Stomach (tissue), 19 donors: ENCODE measurements at regions of chr9 and their contacts with region 1.

Region 1: GRCh38 chr9:132798817-132799790 is 79.0 kb downstream of the AK8 start:
- DNase-seq: peak; percentile 68 to 86
- H3K4me3 ChIP-seq: peak overlapping the region in 2 of 4 donors; percentile 0 to 32
- H3K27ac ChIP-seq: peak overlapping the region; percentile 15 to 65 (median 51)
- H3K4me1 ChIP-seq: peaks cover 5 to 25% (median 16%) of the 10 kb centered on the region in 4 donors
- H3K27me3 ChIP-seq: peaks cover 0 to 36% (median 0%) of the 10 kb centered on the region in 3 donors
- CTCF ChIP-seq: peak in 4 of 7 experiments; percentile 12 to 39 (median 18)
- EP300 ChIP-seq: no peak
- POLR2A ChIP-seq: no peak

Region 2: GRCh38 chr9:132507746-132508469 is 291.2 kb before region 1 on chr9:
- intact Hi-C with region 1: loop called (anchors 5 kb)
- DNase-seq: peak; percentile 70 to 90
- H3K4me3 ChIP-seq: no peak overlapping the region
- H3K27ac ChIP-seq: no peak overlapping the region
- H3K4me1 ChIP-seq: peaks cover 0 to 8% (median 0%) of the 10 kb centered on the region in 4 donors
- H3K27me3 ChIP-seq: peaks cover 3 to 85% (median 35%) of the 10 kb centered on the region in 3 donors
- CTCF ChIP-seq: peak in 5 of 7 experiments; percentile 59 to 67 (median 66)
- EP300 ChIP-seq: no peak
- POLR2A ChIP-seq: no peak

Region 3: GRCh38 chr9:132520612-132521011 is 278.5 kb before region 1 on chr9:
- intact Hi-C with region 1: no loop called
- DNase-seq: no peak
- H3K4me3 ChIP-seq: no peak overlapping the region
- H3K27ac ChIP-seq: no peak overlapping the region
- H3K4me1 ChIP-seq: no peaks in the 10 kb centered on the region
- H3K27me3 ChIP-seq: peaks cover 4 to 26% (median 11%) of the 10 kb centered on the region in 3 donors
- CTCF ChIP-seq: no peak
- EP300 ChIP-seq: no peak
- POLR2A ChIP-seq: no peak